Heart left ventricle (tissue), 16 donors: ENCODE measurements at regions of chr3 and their contacts with region 1.

Region 1: GRCh38 chr3:45224824-45225464 is 1.1 kb downstream of the TMEM158 start:
- DNase-seq: peak; percentile 55 to 87 (median 74)
- ATAC-seq: peak; percentile 63 to 88 (median 82)
- H3K4me3 ChIP-seq: peak overlapping the region in 11 of 12 donors; percentile 13 to 71 (median 50)
- H3K27ac ChIP-seq: no peak overlapping the region
- H3K4me1 ChIP-seq: peaks cover 0 to 16% (median 5%) of the 10 kb centered on the region in 12 donors
- H3K27me3 ChIP-seq: peaks cover 0 to 69% (median 18%) of the 10 kb centered on the region in 9 donors
- CTCF ChIP-seq: peak; percentile 20 to 62 (median 44)
- POLR2A ChIP-seq: no peak

Region 2: GRCh38 chr3:45105855-45106671 is 118.9 kb before region 1 on chr3:
- intact Hi-C with region 1: no loop called
- DNase-seq: no peak
- ATAC-seq: no peak
- H3K4me3 ChIP-seq: no peak overlapping the region
- H3K27ac ChIP-seq: no peak overlapping the region
- H3K4me1 ChIP-seq: peaks cover 0 to 31% (median 0%) of the 10 kb centered on the region in 12 donors
- H3K27me3 ChIP-seq: no peaks in the 10 kb centered on the region
- CTCF ChIP-seq: no peak
- POLR2A ChIP-seq: no peak

Region 3: DNA sequence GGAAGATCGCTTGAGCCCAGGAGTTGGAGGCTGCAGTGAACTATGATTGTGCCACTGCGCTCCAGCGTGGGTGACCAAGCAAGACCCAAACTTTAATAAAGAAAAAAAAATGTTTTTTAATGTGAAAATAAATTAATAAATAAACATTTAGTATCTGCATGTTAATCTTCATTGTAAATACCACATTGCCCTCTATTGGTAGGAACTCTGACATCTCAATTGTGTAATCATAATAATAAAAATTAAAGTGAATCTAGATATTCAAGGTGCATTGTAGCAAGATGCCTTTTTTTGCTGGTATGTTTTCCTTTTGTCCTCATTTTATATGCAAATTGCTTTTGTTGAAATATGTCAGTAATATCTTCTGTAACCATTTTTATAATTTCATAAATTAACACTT is 274.6 kb after region 1 on chr3:
- intact Hi-C with region 1: loop called in 7 of 10 experiments (anchors 5 to 10 kb)
- DNase-seq: no peak
- ATAC-seq: no peak
- H3K4me3 ChIP-seq: no peak overlapping the region
- H3K27ac ChIP-seq: no peak overlapping the region
- H3K4me1 ChIP-seq: peaks cover 0 to 9% (median 0%) of the 10 kb centered on the region in 12 donors
- H3K27me3 ChIP-seq: no peaks in the 10 kb centered on the region
- CTCF ChIP-seq: peak in 11 of 12 donors; percentile 23 to 56 (median 39)
- POLR2A ChIP-seq: no peak

Region 4: DNA sequence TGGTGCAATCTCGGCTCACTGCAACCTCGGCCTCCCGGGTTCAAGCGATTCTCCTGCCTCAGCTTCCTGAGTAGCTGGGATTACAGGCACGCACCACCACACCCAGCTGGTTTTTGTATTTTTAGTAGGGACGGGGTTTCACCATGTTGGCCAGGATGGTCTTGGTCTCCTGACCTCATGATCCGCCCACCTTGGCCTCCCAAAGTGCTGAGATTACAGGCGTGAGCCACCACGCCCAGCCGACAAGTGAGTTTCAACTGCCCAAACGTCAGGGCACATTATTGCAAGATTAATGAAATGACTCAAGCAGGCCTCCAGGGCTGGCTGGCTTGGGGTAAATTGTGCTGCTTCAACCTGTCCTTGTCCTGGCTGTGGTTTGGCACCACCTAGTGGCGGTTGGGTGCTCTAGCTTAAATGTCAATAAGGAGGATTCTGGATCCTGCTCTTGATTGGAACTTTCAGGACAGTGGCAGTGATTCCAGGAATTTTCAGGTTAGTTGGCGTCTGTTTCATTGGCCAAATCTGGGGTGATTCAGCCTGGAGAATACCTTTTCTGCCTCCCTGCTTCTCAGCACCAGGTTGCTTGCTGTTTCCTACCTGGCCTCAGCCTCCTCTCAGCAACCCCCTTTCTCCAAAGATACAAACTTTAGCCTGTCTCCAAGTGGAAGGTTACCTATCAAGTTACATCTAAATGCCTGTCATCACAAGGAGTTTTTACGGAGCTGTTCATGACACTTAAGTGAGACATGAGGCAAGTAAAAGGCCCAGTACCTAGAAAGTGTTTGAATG is 431.8 kb after region 1 on chr3:
- intact Hi-C with region 1: loop called in 1 of 10 experiments (anchors 10 kb)
- DNase-seq: peak; percentile 84 to 94 (median 93)
- ATAC-seq: peak; percentile 75 to 92 (median 88)
- H3K4me3 ChIP-seq: no peak overlapping the region
- H3K27ac ChIP-seq: peak overlapping the region in 2 of 12 donors; percentile 14 to 16
- H3K4me1 ChIP-seq: peaks cover 0 to 58% (median 41%) of the 10 kb centered on the region in 12 donors
- H3K27me3 ChIP-seq: no peaks in the 10 kb centered on the region
- CTCF ChIP-seq: peak; percentile 89 to 97 (median 93)
- POLR2A ChIP-seq: no peak